ENCODE measurements at regions of chr6 and their contacts with region 1.

Region 1: GRCh38 chr6:111483736-111484632 is 966 bp upstream of the REV3L start:
- DNase-seq: peak; percentile 92
- H3K4me3 Mint-ChIP-seq: peak overlapping the region; percentile 97
- H3K27ac Mint-ChIP-seq: peak overlapping the region; percentile 99
- H3K4me1 Mint-ChIP-seq: peaks cover 56% of the 10 kb centered on the region
- H3K27me3 Mint-ChIP-seq: no peaks in the 10 kb centered on the region

Region 2: GRCh38 chr6:110944681-110945151 is 539.3 kb before region 1 on chr6:
- CTCF ChIA-PET with region 1: no interaction called
- POLR2A ChIA-PET with region 1: interaction called, 3 read pairs
- intact Hi-C with region 1: loop called (anchors 10 kb)
- DNase-seq: peak; percentile 71
- H3K4me3 Mint-ChIP-seq: peak overlapping the region; percentile 16
- H3K27ac Mint-ChIP-seq: peak overlapping the region; percentile 71
- H3K4me1 Mint-ChIP-seq: peaks cover 10% of the 10 kb centered on the region
- H3K27me3 Mint-ChIP-seq: no peaks in the 10 kb centered on the region

Region 3: GRCh38 chr6:111338843-111339242 is 145.1 kb before region 1 on chr6:
- CTCF ChIA-PET with region 1: interaction called, 5 read pairs
- POLR2A ChIA-PET with region 1: no interaction called
- intact Hi-C with region 1: loop called (anchors 5 kb)
- DNase-seq: peak; percentile 11
- H3K4me3 Mint-ChIP-seq: no peak overlapping the region
- H3K27ac Mint-ChIP-seq: peak overlapping the region; percentile 5
- H3K4me1 Mint-ChIP-seq: peaks cover 20% of the 10 kb centered on the region
- H3K27me3 Mint-ChIP-seq: no peaks in the 10 kb centered on the region

Region 4: DNA sequence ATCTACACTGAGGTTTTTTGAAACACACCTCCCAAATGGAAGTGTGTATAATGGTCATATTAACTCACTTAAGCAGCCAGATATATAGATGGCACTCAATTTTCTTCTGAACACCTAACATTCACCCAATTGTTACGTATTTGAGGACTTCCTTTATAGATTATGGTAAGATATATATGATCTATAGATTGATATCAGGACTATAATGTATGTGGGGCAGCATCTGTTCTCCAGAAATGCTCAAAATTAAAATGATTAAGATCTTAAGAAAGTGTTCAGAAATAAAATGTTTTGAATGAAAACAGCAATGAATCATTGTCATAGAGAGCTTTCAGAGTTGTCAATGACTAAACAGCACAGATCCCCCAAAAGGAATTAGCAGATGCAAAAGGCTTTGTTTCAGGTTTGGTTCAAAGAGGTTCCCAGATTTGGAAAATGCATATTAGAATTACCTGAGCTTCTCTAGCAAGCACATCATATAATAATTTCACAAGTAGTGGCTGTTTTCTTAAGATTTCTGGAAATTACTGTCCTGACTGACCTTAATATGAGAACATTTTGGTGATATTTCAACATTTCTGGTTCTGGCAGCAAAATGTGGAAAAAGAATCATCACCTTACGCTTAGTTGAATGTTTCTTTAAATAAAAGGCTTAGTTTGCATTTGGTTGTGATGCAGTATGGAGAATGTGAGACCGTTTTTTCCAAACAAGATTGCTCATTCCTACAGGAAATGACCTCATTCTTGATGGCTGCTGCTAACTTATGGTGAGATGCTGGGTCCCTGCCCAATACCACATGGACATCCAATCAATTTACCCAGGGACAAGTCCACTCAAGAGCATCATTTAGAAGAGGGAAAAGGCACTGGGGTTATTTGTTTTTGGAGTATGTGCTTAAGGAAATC is 90.2 kb after region 1 on chr6:
- CTCF ChIA-PET with region 1: no interaction called
- POLR2A ChIA-PET with region 1: interaction called, 3 read pairs
- intact Hi-C with region 1: loop called (anchors 1 kb)
- DNase-seq: peak; percentile 27
- H3K4me3 Mint-ChIP-seq: no peak overlapping the region
- H3K27ac Mint-ChIP-seq: peak overlapping the region; percentile 81
- H3K4me1 Mint-ChIP-seq: peaks cover 19% of the 10 kb centered on the region
- H3K27me3 Mint-ChIP-seq: no peaks in the 10 kb centered on the region

Region 5: DNA sequence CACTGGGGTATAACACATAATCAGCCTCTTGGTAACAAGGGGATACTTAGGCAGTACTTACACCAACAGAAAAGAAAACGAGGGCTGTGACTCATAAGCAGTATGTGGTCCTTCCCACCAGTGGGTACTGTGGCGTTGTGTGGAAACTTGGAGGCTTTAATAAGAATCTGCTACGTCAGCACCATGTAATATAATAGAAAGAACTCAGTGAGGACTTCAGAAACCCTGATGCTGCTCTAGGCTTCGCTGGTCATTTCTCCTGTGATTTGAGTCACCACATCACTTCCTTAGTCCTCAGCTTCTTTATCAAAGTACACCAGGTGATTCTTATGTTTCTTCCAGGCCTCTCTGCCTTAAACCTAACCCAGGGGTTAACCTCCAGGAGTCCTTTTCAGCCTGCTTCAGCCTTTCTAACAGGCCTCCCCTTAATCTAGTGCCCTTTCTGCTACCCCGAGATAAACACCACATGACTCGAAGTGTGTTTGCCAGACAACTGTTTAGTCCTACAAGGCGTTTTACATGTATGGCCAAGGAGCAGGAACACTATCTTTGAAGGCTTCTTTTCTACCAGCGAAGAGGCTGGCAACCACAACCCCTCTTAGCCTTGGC is 320.7 kb after region 1 on chr6:
- CTCF ChIA-PET with region 1: no interaction called
- POLR2A ChIA-PET with region 1: no interaction called
- intact Hi-C with region 1: loop called (anchors 10 kb)
- DNase-seq: peak; percentile 86
- H3K4me3 Mint-ChIP-seq: peak overlapping the region; percentile 59
- H3K27ac Mint-ChIP-seq: peak overlapping the region; percentile 91
- H3K4me1 Mint-ChIP-seq: peaks cover 94% of the 10 kb centered on the region
- H3K27me3 Mint-ChIP-seq: no peaks in the 10 kb centered on the region

Region 6: GRCh38 chr6:112018619-112019416 is 534.8 kb after region 1 on chr6:
- CTCF ChIA-PET with region 1: interaction called, 4 read pairs
- POLR2A ChIA-PET with region 1: no interaction called
- intact Hi-C with region 1: loop called (anchors 2 kb)
- DNase-seq: no peak
- H3K4me3 Mint-ChIP-seq: peak overlapping the region; percentile 3
- H3K27ac Mint-ChIP-seq: peak overlapping the region; percentile 90
- H3K4me1 Mint-ChIP-seq: peaks cover 56% of the 10 kb centered on the region
- H3K27me3 Mint-ChIP-seq: no peaks in the 10 kb centered on the region

Region 7: GRCh38 chr6:112480553-112480952 is 996.6 kb after region 1 on chr6:
- CTCF ChIA-PET with region 1: no interaction called
- POLR2A ChIA-PET with region 1: no interaction called
- intact Hi-C with region 1: no loop called
- DNase-seq: no peak
- H3K4me3 Mint-ChIP-seq: no peak overlapping the region
- H3K27ac Mint-ChIP-seq: no peak overlapping the region
- H3K4me1 Mint-ChIP-seq: no peaks in the 10 kb centered on the region
- H3K27me3 Mint-ChIP-seq: no peaks in the 10 kb centered on the region